ENCODE measurements at regions of chr12 and their contacts with region 1.

Region 1: GRCh38 chr12:12890815-12891645 is at the start of gene GPRC5A:
- DNase-seq: peak; percentile 98
- H3K4me3 Mint-ChIP-seq: peak within 1 kb of the TSS; percentile 95
- H3K27ac Mint-ChIP-seq: peak within 1 kb of the TSS; percentile 76
- H3K4me1 Mint-ChIP-seq: peaks cover 46% of the 10 kb centered on the region
- H3K27me3 Mint-ChIP-seq: no peaks in the 10 kb centered on the region
- CTCF ChIP-seq: no peak
- total RNA-seq, gene GPRC5A: 742 and 748 TPM in 2 replicates

Region 2: GRCh38 chr12:12813120-12814101 is 77.6 kb before region 1 on chr12 and contains the start of gene DDX47:
- CTCF ChIA-PET with region 1: interaction called, 10 read pairs
- intact Hi-C with region 1: no loop called
- DNase-seq: peak; percentile 98
- H3K4me3 Mint-ChIP-seq: peak within 1 kb of the TSS; percentile 88
- H3K27ac Mint-ChIP-seq: peak within 1 kb of the TSS; percentile 95
- H3K4me1 Mint-ChIP-seq: peaks cover 56% of the 10 kb centered on the region
- H3K27me3 Mint-ChIP-seq: no peaks in the 10 kb centered on the region
- CTCF ChIP-seq: peak; percentile 92
- total RNA-seq, gene DDX47: 60.2 and 60.5 TPM in 2 replicates

Region 3: GRCh38 chr12:12837025-12837872 is 53.8 kb before region 1 on chr12:
- CTCF ChIA-PET with region 1: interaction called, 37 read pairs
- intact Hi-C with region 1: loop called (anchors 2 kb)
- DNase-seq: peak; percentile 64
- H3K4me3 Mint-ChIP-seq: peak overlapping the region; percentile 25
- H3K27ac Mint-ChIP-seq: peak overlapping the region; percentile 82
- H3K4me1 Mint-ChIP-seq: peaks cover 70% of the 10 kb centered on the region
- H3K27me3 Mint-ChIP-seq: no peaks in the 10 kb centered on the region
- CTCF ChIP-seq: no peak

Measured in Calu3 (cell line).